OCI-LY7 (cell line): ENCODE measurements at regions of chr2 and their contacts with region 1.

Region 1: GRCh38 chr2:3558205-3559014 is at the start of gene RNASEH1:
- DNase-seq: peak; percentile 98
- H3K4me3 ChIP-seq: peak within 1 kb of the TSS; percentile 80
- H3K27ac ChIP-seq: peak within 1 kb of the TSS; percentile 99
- H3K4me1 ChIP-seq: peaks cover 44% of the 10 kb centered on the region
- CTCF ChIP-seq: no peak
- total RNA-seq, gene RNASEH1: 34.7 and 35.7 TPM in 2 replicates

Region 2: DNA sequence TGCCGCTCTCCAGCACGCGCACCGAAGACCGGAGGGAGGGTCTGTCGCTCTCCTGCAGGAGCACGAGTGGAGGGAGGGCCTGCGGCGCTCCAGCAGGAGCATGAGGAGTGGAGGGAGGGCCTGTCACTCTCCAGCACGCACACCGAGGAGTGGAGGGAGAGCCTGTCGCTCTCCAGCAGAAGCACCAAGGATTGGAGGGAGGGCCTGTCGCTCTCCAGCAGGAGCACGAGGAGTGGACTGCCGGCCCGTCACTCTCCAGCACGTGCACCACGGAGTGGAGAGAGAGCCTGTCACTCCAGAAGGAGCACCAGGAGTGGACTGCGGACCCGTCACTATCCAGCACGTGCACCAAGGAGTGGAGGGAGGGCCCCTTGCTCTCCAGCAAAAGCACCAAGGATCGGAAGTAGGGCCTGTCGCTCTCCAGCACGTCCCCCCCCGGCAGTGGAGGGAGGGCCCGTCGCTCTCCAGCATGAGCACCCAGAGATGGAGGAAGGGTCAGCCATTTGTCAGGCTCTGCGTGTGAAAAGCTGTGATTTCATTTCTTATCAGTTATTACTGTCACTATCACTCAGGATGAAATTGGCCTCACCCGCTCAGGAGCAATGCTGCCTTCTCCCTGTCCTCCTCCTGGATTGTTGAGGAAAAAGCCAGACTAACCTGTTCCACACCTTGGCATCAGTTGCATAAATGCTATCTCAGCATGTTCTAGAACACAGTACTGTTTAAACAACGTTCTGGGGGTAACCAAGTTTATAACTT is 75.0 kb before region 1 on chr2:
- CTCF ChIA-PET with region 1: no interaction called
- POLR2A ChIA-PET with region 1: no interaction called
- intact Hi-C with region 1: no loop called
- DNase-seq: no peak
- H3K4me3 ChIP-seq: no peak overlapping the region
- H3K27ac ChIP-seq: no peak overlapping the region
- H3K4me1 ChIP-seq: peaks cover 23% of the 10 kb centered on the region
- CTCF ChIP-seq: no peak

Region 3: DNA sequence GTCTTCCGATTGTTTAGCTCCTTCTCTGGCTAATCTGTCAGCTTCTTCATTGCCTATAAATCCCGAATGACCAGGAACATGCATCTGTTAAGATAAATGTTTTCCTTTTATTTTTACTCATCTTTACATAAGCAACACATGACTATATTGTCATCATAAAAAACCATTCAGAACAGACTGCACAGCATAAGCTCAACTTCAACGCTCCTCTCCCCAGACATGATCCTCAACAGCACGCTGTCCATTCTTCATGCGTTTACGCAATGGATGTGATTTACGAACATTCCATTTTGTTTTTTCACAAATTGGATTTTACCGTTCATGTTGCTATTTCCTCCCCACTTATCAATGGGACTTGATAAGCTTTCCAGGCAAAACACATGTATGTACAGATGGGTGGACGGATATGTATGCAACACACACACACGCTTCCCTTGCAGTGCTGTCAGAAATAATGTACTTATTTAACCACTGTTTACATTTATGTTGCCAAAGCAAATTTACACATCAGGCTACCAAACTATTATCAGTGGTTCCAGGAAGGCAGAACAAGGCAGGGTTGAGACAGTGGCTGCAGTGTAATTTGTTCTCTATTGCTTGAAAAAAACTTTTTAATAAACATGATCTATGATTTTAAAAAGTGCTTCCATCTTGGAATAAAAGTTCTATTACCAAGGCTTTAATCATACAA is 12.5 kb before region 1 on chr2:
- CTCF ChIA-PET with region 1: no interaction called
- POLR2A ChIA-PET with region 1: interaction called, 12 read pairs
- intact Hi-C with region 1: no loop called
- DNase-seq: no peak
- H3K4me3 ChIP-seq: no peak overlapping the region
- H3K27ac ChIP-seq: no peak overlapping the region
- H3K4me1 ChIP-seq: no peaks in the 10 kb centered on the region
- CTCF ChIP-seq: no peak

Region 4: GRCh38 chr2:3575534-3576262 is 17.3 kb after region 1 on chr2:
- CTCF ChIA-PET with region 1: interaction called, 3 read pairs
- POLR2A ChIA-PET with region 1: interaction called, 19 read pairs
- intact Hi-C with region 1: loop called (anchors 1 kb)
- DNase-seq: peak; percentile 42
- H3K4me3 ChIP-seq: peak overlapping the region; percentile 82
- H3K27ac ChIP-seq: peak overlapping the region; percentile 66
- H3K4me1 ChIP-seq: peaks cover 49% of the 10 kb centered on the region
- CTCF ChIP-seq: no peak

Region 5: GRCh38 chr2:3608373-3609278 is 50.2 kb after region 1 on chr2:
- CTCF ChIA-PET with region 1: no interaction called
- POLR2A ChIA-PET with region 1: interaction called, 9 read pairs
- intact Hi-C with region 1: loop called (anchors 2 kb)
- DNase-seq: peak; percentile 29
- H3K4me3 ChIP-seq: peak overlapping the region; percentile 45
- H3K27ac ChIP-seq: peak overlapping the region; percentile 82
- H3K4me1 ChIP-seq: peaks cover 52% of the 10 kb centered on the region
- CTCF ChIP-seq: no peak